Activated CD8-positive, alpha-beta T cell treated with anti-CD3 and anti-CD28 coated beads, Interleukin-2, amount 10 ng/mL, durations not matched to agents 7 days and 5 days (primary cell): ENCODE measurements at regions of chr11 and their contacts with region 1.

Region 1: DNA sequence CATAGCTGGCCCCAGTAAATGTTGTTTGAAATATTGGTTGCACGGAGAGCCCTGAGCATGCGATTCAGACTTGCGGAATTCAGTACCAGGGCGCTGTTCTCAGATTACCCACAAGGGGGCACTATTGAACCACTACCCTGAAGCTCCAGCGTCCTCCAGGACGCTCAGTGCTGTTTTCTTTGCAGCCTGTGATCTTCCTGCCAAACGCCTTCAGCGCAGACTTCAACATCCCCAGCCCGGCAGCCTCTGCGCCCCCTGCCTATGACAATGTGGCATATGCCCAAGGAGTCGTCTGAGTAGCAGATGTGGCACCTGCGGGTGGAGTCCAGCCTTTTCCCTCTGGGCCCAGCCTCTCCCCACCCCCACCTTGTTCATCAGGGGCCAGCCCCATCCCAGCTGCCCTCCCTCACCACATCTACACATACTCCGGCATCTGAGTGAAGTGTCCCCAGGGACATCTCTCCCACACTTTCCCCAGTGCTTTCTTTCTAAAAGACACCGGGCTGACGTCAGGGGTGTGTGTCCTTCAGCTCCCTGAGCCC is 9.6 kb upstream of the MS4A10 start:
- DNase-seq: peak; percentile 90
- ATAC-seq: peak; percentile 92
- H3K4me3 Mint-ChIP-seq: no peak overlapping the region
- H3K27ac Mint-ChIP-seq: no peak overlapping the region
- H3K4me1 Mint-ChIP-seq: peaks cover 7% of the 10 kb centered on the region
- H3K27me3 Mint-ChIP-seq: peaks cover 13% of the 10 kb centered on the region

Region 2: DNA sequence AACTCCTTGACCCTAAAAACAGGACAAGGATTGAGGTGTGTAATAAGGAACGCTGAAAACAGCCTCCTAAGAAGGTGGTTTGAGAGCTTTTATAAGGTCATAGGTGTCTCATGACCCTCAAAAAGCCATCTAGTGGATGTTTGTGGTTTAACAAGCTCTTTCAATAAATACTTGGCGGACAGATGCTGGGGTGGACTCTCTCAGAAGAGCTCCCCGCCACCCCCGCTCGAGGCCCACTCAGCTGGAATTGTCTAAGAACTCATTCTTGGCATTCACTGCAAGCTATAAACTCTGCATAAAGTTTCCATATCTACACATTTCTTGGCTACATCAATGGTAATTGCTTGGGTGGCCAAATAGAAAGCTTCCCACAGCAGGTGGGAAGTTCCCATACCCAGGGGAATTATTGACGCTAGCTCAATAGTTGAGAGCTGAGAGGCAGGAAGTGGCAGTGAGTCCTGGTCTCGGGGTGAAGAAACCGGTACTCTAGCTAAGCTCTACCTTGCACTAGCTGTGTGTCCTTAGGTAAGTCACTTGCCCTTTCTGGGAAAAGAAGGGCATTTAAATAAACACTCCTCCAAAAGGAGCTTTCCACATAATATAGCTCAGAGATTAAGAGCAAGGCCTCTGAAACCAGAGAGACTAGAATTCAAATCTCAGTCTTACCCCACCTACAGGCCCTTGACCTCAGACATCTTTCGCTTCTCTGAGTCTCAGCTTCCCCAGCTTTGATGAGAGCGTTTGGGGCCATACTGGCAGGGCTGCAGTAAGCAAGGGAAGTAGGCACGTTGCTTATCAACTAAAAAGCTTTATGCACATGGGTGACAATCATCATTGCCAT is 12.4 kb before region 1 on chr11:
- CTCF ChIA-PET with region 1: interaction called, 49 read pairs
- POLR2A ChIA-PET with region 1: no interaction called
- DNase-seq: no peak
- ATAC-seq: no peak
- H3K4me3 Mint-ChIP-seq: no peak overlapping the region
- H3K27ac Mint-ChIP-seq: no peak overlapping the region
- H3K4me1 Mint-ChIP-seq: no peaks in the 10 kb centered on the region
- H3K27me3 Mint-ChIP-seq: peaks cover 33% of the 10 kb centered on the region

Region 3: DNA sequence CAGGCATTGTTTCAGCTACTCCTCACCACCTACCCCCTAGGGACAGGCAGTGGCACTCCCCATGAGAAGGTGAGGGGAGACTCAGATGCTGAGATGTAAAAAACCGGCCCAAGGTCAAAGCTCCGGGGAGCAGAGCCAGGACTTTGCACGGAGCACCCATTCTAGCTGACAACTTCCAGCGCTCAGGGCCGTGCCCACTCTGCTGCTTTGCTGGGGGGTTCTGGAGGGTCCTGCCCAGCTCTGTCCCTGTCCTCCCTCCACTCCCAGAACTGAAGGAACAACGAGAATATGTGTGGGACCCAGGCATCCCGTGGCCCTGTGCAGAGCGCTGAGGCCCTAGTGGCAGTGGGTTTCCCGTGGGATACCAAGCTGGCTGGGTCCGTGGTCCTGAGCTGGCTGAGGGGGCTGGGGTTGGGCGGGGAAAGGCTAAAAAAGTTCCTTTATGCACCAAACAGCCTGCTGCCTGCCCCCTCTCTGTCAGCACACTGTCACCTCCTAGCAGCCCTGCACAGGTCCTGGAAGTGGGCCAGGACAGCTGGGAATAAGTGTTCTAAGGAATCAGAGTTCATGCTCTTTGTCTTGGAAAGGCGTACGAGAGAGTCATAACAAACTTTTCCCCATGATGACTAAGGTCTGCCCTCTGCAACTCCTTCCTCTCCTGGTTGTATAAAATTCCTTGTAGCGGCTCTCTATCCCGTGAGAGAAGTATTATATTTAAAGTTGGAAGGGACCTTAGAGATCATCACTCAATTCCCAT is 11.5 kb after region 1 on chr11:
- CTCF ChIA-PET with region 1: interaction called, 12 read pairs
- POLR2A ChIA-PET with region 1: no interaction called
- DNase-seq: no peak
- ATAC-seq: no peak
- H3K4me3 Mint-ChIP-seq: no peak overlapping the region
- H3K27ac Mint-ChIP-seq: no peak overlapping the region
- H3K4me1 Mint-ChIP-seq: no peaks in the 10 kb centered on the region
- H3K27me3 Mint-ChIP-seq: no peaks in the 10 kb centered on the region

Region 4: GRCh38 chr11:60855726-60856633 is 80.5 kb after region 1 on chr11 and contains the start of gene PTGDR2:
- CTCF ChIA-PET with region 1: no interaction called
- POLR2A ChIA-PET with region 1: no interaction called
- DNase-seq: peak; percentile 51
- ATAC-seq: peak; percentile 46
- H3K4me3 Mint-ChIP-seq: peak within 1 kb of the TSS; percentile 63
- H3K27ac Mint-ChIP-seq: peak within 1 kb of the TSS; percentile 83
- H3K4me1 Mint-ChIP-seq: peaks cover 63% of the 10 kb centered on the region
- H3K27me3 Mint-ChIP-seq: no peaks in the 10 kb centered on the region
- total RNA-seq, gene PTGDR2: 3.3 to 3.4 TPM

Region 5: GRCh38 chr11:60899046-60899936 is 123.8 kb after region 1 on chr11:
- CTCF ChIA-PET with region 1: interaction called, 11 read pairs
- POLR2A ChIA-PET with region 1: no interaction called
- DNase-seq: peak; percentile 50
- ATAC-seq: peak; percentile 73
- H3K4me3 Mint-ChIP-seq: no peak overlapping the region
- H3K27ac Mint-ChIP-seq: no peak overlapping the region
- H3K4me1 Mint-ChIP-seq: peaks cover 19% of the 10 kb centered on the region
- H3K27me3 Mint-ChIP-seq: no peaks in the 10 kb centered on the region